ENCODE measurements at regions of chr18 and their contacts with region 1.

Region 1: GRCh38 chr18:58529714-58530354 is 99.1 kb downstream of the ALPK2 start:
- DNase-seq: peak; percentile 48 to 87 (median 66)
- ATAC-seq: peak; percentile 84 to 87
- H3K4me3 Mint-ChIP-seq: no peak overlapping the region
- H3K27ac Mint-ChIP-seq: peak overlapping the region in 1 of 10 donors; percentile 11
- H3K4me1 Mint-ChIP-seq: peaks cover 2 to 14% (median 5%) of the 10 kb centered on the region in 4 donors
- H3K27me3 Mint-ChIP-seq: peaks cover 0 to 2% (median 0%) of the 10 kb centered on the region in 5 donors

Region 2: GRCh38 chr18:58552057-58552461 is 22.2 kb after region 1 on chr18:
- POLR2A ChIA-PET with region 1: no interaction called
- DNase-seq: no peak
- ATAC-seq: no peak
- H3K4me3 Mint-ChIP-seq: no peak overlapping the region
- H3K27ac Mint-ChIP-seq: no peak overlapping the region
- H3K4me1 Mint-ChIP-seq: peaks cover 0 to 18% (median 2%) of the 10 kb centered on the region in 4 donors
- H3K27me3 Mint-ChIP-seq: no peaks in the 10 kb centered on the region

Region 3: GRCh38 chr18:58768293-58768974 is 238.6 kb after region 1 on chr18:
- POLR2A ChIA-PET with region 1: interaction called, 14 read pairs
- DNase-seq: peak; percentile 32 to 76 (median 59)
- ATAC-seq: peak; percentile 91 to 95
- H3K4me3 Mint-ChIP-seq: peak overlapping the region in 9 of 10 donors; percentile 19 to 73 (median 61)
- H3K27ac Mint-ChIP-seq: peak overlapping the region in 1 of 10 donors; percentile 53
- H3K4me1 Mint-ChIP-seq: peaks cover 3 to 17% (median 14%) of the 10 kb centered on the region in 4 donors
- H3K27me3 Mint-ChIP-seq: peaks cover 28 to 63% (median 41%) of the 10 kb centered on the region in 5 donors

Measured in naive thymus-derived CD8-positive, alpha-beta T cell (primary cell).